Heart left ventricle (tissue), 16 donors: ENCODE measurements at regions of chr6 and their contacts with region 1.

Region 1: DNA sequence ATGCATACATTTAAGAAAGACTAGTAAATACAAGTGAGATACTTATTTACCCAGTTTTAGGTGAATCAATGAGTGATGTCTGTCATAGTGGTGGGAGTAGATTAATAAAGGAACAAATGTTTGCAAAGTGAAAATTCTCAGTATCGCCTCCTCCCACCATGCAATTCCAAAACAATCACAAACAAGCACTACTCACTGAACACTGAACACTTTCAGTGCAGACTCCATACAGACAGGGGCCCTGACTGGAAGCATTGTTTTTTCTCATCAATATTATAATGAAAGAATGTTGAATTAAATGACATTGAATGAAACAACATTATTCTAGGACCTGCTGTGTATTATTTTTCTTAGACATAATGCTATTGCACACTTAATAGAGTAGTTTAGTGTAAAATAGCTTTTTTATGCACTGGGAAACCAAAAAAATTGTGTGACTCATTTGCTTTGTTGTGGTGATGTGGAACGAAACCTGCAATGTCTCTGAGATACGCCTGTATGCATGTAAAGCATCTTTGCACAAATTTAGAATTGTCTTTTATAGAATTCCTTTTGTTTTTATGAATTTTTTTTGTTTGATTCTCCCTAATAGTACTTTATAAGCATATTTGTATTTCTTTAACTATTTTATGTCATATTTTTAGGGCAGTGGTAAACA is 317.5 kb downstream of the UTRN start:
- DNase-seq: no peak
- ATAC-seq: no peak
- H3K4me3 ChIP-seq: no peak overlapping the region
- H3K27ac ChIP-seq: no peak overlapping the region
- H3K4me1 ChIP-seq: peaks cover 0 to 4% (median 0%) of the 10 kb centered on the region in 12 donors
- H3K27me3 ChIP-seq: no peaks in the 10 kb centered on the region
- CTCF ChIP-seq: no peak
- POLR2A ChIP-seq: no peak

Region 2: DNA sequence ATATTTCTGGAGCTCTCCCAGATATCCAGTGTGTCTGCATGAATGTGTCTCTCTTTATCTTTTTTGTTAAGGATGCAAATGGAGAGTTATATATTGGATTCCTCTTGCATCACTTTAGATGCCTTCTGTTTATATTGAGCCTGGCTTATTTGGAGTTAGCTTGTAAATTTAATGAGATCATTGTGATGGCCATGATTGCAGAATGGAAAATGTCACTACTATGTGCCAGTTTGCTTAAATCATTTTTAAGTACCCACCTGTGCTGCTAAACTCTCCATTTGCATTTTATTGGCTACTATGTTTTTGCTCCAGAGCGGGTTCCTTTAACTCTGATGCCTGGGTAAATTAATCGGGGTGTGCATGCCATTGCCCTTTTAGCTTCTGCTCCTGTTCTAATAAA is 17.3 kb after region 1 on chr6:
- intact Hi-C with region 1: no loop called
- DNase-seq: no peak
- ATAC-seq: no peak
- H3K4me3 ChIP-seq: no peak overlapping the region
- H3K27ac ChIP-seq: no peak overlapping the region
- H3K4me1 ChIP-seq: peaks cover 0 to 9% (median 0%) of the 10 kb centered on the region in 12 donors
- H3K27me3 ChIP-seq: no peaks in the 10 kb centered on the region
- CTCF ChIP-seq: no peak
- POLR2A ChIP-seq: no peak

Region 3: GRCh38 chr6:144696610-144697368 is 94.1 kb after region 1 on chr6:
- intact Hi-C with region 1: loop called in 1 of 10 experiments (anchors 10 kb)
- DNase-seq: no peak
- ATAC-seq: no peak
- H3K4me3 ChIP-seq: no peak overlapping the region
- H3K27ac ChIP-seq: no peak overlapping the region
- H3K4me1 ChIP-seq: peaks cover 0 to 5% (median 0%) of the 10 kb centered on the region in 12 donors
- H3K27me3 ChIP-seq: no peaks in the 10 kb centered on the region
- CTCF ChIP-seq: no peak
- POLR2A ChIP-seq: no peak